Stomach (tissue), 19 donors: ENCODE measurements at regions of chr4 and their contacts with region 1.

Region 1: DNA sequence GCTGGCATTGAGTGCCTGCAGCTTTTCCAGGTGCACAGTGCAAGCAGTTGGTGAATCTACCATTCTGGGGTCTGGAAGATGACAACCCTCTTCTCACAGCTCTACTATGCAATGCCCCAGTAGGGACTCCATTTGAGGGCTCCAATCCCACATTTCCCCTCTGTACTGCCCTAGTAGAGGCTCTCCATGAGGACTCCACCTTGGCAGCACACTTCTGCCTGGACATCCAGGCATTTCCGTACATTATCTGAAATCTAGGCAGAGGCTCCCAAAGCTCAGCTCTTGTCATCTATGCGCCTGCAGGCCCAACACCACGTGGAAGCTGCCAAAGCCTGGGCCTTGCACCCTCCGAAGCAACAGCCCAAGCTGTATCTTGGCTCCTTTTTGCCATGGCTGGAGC is 8.4 kb upstream of the SMAD1 start:
- DNase-seq: no peak
- H3K4me3 ChIP-seq: no peak overlapping the region
- H3K27ac ChIP-seq: no peak overlapping the region
- H3K4me1 ChIP-seq: no peaks in the 10 kb centered on the region
- H3K27me3 ChIP-seq: no peaks in the 10 kb centered on the region
- CTCF ChIP-seq: no peak
- EP300 ChIP-seq: no peak
- POLR2A ChIP-seq: no peak

Region 2: DNA sequence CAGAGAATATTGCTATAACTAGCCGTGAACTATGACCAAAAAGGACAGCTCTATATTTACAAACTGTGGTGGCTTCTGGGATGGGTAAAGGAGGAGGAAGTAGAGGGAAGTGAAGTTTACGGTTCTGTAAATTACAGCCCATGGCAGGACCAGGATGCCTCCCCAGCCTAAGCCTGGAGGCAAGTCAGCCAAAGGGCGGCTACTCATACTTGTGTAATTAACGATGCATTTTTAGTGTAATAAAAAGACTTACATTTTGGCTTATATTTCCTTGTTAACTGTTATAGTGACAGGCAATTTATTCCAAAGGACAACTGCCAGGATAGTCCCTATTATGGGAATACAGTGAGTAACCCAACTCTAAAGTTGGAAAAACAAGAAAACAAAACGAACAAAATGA is 152.9 kb before region 1 on chr4:
- intact Hi-C with region 1: no loop called
- DNase-seq: peak in 1 of 2 donors; percentile 29
- H3K4me3 ChIP-seq: no peak overlapping the region
- H3K27ac ChIP-seq: no peak overlapping the region
- H3K4me1 ChIP-seq: no peaks in the 10 kb centered on the region
- H3K27me3 ChIP-seq: no peaks in the 10 kb centered on the region
- CTCF ChIP-seq: no peak
- EP300 ChIP-seq: no peak
- POLR2A ChIP-seq: no peak

Region 3: GRCh38 chr4:145557720-145558119 is 84.5 kb after region 1 on chr4:
- intact Hi-C with region 1: loop called (anchors 10 kb)
- DNase-seq: peak; percentile 60 to 78
- H3K4me3 ChIP-seq: no peak overlapping the region
- H3K27ac ChIP-seq: no peak overlapping the region
- H3K4me1 ChIP-seq: no peaks in the 10 kb centered on the region
- H3K27me3 ChIP-seq: no peaks in the 10 kb centered on the region
- CTCF ChIP-seq: peak in 5 of 7 experiments; percentile 79 to 84 (median 83)
- EP300 ChIP-seq: no peak
- POLR2A ChIP-seq: no peak